ENCODE measurements at regions of chr15 and their contacts with region 1.

Region 1: DNA sequence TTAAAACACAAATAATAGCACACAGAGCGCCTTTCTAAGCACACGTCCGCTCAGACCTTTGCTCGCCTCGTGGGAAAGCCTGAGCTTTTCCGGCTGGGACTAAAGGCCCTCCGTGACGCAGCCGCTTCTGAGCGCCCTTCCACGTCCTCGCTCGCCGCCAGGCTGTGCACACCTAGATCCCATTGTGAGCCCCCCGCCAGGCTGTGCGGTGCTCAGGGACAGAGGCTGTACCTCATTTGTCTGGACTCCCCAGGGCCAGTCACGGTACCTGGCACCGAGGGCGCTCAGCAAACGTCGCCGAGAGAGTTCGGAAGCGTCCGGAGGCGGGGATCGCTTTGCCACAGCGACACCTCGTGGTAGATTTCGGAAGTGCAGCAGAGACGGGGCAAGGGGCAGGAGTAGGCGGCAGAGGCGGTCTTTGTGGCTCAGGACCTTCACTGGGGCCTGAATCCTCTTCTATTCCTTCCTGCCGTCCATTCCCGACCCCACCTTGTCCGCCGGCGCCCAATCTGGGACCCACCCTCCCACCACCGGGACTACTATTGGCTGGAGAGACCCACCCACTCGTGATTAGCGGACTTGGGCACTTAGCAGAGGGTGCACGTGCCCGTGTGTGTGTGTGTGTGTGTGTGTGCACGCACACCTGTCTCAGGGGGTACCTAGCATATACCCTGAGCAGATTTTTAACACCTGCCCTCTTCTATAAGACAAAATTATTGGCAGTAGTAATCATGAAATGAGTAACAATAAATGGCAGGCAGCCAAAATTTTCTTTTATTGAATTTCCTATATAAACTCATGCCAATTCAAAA is 65.6 kb downstream of the RHCG start:
- DNase-seq: peak; percentile 75 to 95 (median 84)
- ATAC-seq: peak; percentile 95
- H3K4me3 ChIP-seq: peak overlapping the region; percentile 38 to 49
- H3K4me3 Mint-ChIP-seq: peak overlapping the region; percentile 79
- H3K27ac ChIP-seq: no peak overlapping the region
- H3K27ac Mint-ChIP-seq: no peak overlapping the region
- H3K4me1 ChIP-seq: no peaks in the 10 kb centered on the region
- H3K4me1 Mint-ChIP-seq: peaks cover 6% of the 10 kb centered on the region
- H3K27me3 ChIP-seq: peaks cover 0 to 4% of the 10 kb centered on the region in 2 experiments
- H3K27me3 Mint-ChIP-seq: peaks cover 23% of the 10 kb centered on the region
- CTCF ChIP-seq: peak; percentile 92

Region 2: GRCh38 chr15:89419382-89419984 is 11.3 kb before region 1 on chr15:
- CTCF ChIA-PET with region 1: interaction called, 18 read pairs
- POLR2A ChIA-PET with region 1: no interaction called
- intact Hi-C with region 1: no loop called
- DNase-seq: peak in 4 of 9 experiments; percentile 25 to 49 (median 44)
- ATAC-seq: peak; percentile 59
- H3K4me3 ChIP-seq: no peak overlapping the region
- H3K4me3 Mint-ChIP-seq: no peak overlapping the region
- H3K27ac ChIP-seq: no peak overlapping the region
- H3K27ac Mint-ChIP-seq: no peak overlapping the region
- H3K4me1 ChIP-seq: peaks cover 8% of the 10 kb centered on the region
- H3K4me1 Mint-ChIP-seq: peaks cover 8% of the 10 kb centered on the region
- H3K27me3 ChIP-seq: peaks cover 10 to 25% of the 10 kb centered on the region in 2 experiments
- H3K27me3 Mint-ChIP-seq: peaks cover 63% of the 10 kb centered on the region
- CTCF ChIP-seq: no peak

Region 3: DNA sequence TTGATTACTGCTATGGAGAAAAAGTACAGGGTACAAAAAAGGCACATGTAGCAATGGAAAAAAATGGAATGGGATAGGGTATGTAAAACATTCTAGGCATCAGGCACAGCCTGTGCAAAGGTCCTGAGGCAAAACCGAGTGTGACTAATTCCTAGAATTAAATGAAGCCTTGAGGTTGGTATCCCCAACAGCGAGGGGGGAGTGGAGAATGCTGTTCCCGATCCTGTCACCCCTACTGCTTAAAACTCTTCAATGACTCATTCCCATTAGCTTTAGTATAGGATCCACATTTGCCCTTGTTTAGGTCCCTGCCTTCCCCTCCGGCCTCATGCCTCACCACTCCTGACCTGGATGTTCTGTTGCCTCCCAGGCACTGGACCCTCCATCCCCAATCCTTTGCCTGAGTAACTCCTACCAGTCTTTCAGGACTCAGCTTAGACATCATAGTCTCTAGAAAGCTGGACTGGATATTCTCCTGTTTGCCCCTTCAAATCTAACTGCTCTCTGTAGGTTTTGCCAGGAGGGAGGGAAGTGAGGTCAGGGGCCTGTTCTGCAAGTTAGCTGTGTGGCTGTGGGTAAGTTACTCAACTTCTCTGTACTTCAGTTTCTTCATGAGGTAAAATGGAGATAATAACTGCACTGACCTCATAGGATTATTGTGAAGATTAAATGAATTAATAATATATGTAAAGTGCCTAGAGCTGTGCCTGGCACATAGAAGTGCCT is 27.9 kb after region 1 on chr15:
- CTCF ChIA-PET with region 1: no interaction called
- POLR2A ChIA-PET with region 1: no interaction called
- intact Hi-C with region 1: no loop called
- DNase-seq: no peak
- ATAC-seq: no peak
- H3K4me3 ChIP-seq: no peak overlapping the region
- H3K4me3 Mint-ChIP-seq: no peak overlapping the region
- H3K27ac ChIP-seq: no peak overlapping the region
- H3K27ac Mint-ChIP-seq: no peak overlapping the region
- H3K4me1 ChIP-seq: no peaks in the 10 kb centered on the region
- H3K4me1 Mint-ChIP-seq: no peaks in the 10 kb centered on the region
- H3K27me3 ChIP-seq: no peaks in the 10 kb centered on the region
- H3K27me3 Mint-ChIP-seq: peaks cover 9% of the 10 kb centered on the region
- CTCF ChIP-seq: no peak

Measured in CD8-positive, alpha-beta T cell (primary cell).